PC-3 (cell line): ENCODE measurements at regions of chr2 and their contacts with region 1.

Region 1: DNA sequence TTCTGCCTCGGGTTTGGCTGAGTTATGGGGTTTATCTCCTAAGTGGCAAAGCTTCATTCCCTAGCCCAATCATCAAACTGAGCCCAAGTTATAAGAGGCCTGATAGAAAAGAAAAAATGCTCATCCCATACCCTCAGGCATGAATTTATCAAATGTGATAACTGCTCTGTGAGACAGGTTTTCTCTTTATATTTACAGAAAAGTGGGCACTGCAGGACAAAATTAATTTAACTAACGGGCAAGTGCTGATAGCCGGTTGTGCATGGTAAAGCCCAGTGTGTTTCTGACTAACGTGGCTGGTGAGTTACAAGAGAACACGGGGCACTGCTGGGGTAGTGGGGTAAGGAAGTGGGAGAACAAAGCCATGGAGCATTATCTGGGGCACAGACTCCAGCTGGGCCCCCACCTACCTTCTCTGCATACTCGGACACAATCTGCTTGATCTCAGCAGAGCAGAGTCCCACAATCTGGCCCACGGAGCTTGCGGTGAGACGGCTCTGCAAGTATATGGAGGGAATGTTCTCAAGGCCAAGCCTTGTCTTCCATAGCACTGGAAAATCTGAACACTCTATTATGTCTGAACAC is 40.3 kb downstream of the CCDC93 start:
- DNase-seq: no peak
- ATAC-seq: no peak
- H3K4me3 ChIP-seq: no peak overlapping the region
- H3K27ac ChIP-seq: no peak overlapping the region
- H3K4me1 ChIP-seq: no peaks in the 10 kb centered on the region
- H3K27me3 ChIP-seq: no peaks in the 10 kb centered on the region
- CTCF ChIP-seq: no peak

Region 2: DNA sequence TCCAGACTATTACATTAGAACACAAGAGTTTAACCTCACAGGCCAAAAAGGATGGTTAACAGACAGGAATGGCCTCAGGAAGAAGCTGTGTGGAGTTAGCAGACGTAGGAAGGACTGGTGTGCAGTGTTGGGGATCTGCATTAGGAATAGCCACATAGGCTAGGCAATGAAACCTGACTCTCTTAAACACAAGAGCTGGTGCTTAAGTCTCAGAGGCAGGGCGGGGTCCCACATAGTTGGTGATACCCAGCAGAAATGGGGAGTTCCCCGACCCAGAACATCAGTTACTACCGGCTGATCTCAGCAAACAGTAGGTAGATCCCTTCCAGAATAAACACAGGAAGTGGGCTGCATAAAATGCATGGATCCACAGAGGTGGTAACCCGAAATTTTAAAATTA is 23.8 kb before region 1 on chr2:
- CTCF ChIA-PET with region 1: no interaction called
- POLR2A ChIA-PET with region 1: interaction called, 25 read pairs
- intact Hi-C with region 1: no loop called
- DNase-seq: no peak
- ATAC-seq: peak; percentile 72
- H3K4me3 ChIP-seq: no peak overlapping the region
- H3K27ac ChIP-seq: no peak overlapping the region
- H3K4me1 ChIP-seq: 0 out of 2 replicates have a peak, but pooled peaks cover 9% of the 10 kb centered on the region
- H3K27me3 ChIP-seq: no peaks in the 10 kb centered on the region
- CTCF ChIP-seq: no peak

Region 3: DNA sequence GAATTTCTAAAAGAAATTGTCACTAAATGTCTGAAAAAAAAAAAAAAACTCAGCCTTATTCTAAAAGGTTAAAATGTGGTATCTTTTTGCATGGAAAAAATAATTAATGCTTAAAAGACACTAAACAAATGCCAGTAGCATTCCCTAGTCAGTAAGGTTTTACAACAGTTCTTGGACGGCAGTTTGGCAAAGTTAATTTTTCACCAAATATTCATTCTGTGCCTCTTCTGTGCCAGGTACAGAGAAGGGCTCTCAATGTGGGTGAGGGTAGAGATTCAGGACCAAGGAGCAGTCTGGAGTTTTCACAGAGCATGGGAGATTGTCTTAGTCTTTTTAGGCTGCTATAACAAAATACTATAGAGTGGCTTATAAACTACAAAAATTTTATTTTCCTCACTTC is 46.2 kb after region 1 on chr2:
- CTCF ChIA-PET with region 1: no interaction called
- POLR2A ChIA-PET with region 1: no interaction called
- intact Hi-C with region 1: no loop called
- DNase-seq: no peak
- ATAC-seq: no peak
- H3K4me3 ChIP-seq: no peak overlapping the region
- H3K27ac ChIP-seq: no peak overlapping the region
- H3K4me1 ChIP-seq: peaks cover 5% of the 10 kb centered on the region; the same call in 1 of the 2 replicates
- H3K27me3 ChIP-seq: no peaks in the 10 kb centered on the region
- CTCF ChIP-seq: no peak